ENCODE measurements at regions of chr19 and their contacts with region 1.

Region 1: GRCh38 chr19:49546825-49547565 is 19.2 kb downstream of the RCN3 start:
- DNase-seq: peak; percentile 80
- CTCF ChIP-seq: peak; percentile 81

Region 2: DNA sequence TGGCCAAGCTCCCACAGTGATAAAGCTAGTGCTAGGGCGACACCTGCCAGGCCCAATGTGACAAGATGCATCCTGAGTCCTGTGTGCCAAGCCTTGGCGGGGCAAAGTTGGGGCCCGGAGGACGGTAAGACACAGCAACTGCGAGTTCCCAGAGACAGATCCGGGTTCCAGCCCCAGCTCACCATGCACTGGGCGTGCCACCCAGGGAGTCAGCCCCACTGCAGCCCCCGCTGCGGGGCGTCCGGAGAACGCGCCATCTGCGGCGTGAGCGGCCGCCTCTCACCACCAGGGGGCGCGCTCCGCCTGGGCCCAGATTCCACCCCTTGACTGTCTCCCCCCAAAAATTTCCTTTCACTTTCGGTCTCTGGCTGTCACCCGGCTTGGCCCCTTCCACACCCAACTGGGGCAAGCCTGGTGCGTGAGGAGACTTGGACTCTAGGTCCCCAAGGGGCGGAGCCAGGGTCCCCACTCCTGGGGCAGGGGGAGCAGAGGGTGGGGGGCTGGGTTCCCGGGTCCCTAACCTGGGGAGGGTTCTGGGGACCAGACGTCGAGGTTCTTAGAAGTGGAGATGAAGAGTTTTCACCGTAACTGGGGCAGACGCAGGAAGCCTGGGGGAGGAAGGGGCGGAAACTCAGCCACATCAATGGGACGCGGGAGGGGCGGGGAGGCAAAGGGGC is 73.0 kb before region 1 on chr19 and contains the start of gene FLT3LG:
- CTCF ChIA-PET with region 1: interaction called, 23 read pairs
- POLR2A ChIA-PET with region 1: no interaction called
- DNase-seq: peak; percentile 92
- CTCF ChIP-seq: peak; percentile 94

Region 3: DNA sequence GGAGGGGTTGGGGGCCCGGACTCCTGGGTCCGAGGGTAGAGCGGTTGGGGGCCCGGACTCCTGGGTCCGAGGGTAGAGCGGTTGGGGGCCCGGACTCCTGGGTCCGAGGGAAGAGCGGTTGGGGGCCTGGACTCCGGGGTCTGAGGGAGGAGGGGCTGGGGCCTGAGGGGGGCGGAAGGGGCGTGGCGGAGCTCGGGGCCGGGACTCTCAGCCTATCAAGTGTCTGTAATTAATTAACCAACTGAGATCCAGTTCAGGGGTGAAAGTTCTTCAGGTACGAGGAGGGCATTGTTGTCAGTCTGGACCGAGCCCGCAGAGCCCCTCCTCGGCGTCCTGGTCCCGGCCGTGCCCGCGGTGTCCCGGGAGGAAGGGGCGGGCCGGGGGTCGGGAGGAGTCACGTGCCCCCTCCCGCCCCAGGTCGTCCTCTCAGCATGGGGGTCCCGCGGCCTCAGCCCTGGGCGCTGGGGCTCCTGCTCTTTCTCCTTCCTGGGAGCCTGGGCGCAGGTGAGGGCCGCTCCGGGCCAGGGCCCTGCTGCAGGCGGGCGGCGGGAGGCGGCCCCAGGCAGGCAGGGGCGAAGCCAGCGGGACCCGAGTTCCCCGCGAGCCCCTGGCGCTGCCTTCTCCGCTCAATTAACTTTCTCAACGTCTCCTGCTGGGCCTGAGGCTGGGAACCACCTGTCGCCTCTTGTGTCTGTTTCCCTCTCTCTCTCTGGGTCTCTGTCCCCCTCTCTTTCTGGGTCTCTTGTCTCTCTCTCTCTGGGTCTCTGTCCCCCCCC is 33.8 kb before region 1 on chr19:
- CTCF ChIA-PET with region 1: interaction called, 38 read pairs
- POLR2A ChIA-PET with region 1: no interaction called
- DNase-seq: no peak
- CTCF ChIP-seq: no peak

Region 4: DNA sequence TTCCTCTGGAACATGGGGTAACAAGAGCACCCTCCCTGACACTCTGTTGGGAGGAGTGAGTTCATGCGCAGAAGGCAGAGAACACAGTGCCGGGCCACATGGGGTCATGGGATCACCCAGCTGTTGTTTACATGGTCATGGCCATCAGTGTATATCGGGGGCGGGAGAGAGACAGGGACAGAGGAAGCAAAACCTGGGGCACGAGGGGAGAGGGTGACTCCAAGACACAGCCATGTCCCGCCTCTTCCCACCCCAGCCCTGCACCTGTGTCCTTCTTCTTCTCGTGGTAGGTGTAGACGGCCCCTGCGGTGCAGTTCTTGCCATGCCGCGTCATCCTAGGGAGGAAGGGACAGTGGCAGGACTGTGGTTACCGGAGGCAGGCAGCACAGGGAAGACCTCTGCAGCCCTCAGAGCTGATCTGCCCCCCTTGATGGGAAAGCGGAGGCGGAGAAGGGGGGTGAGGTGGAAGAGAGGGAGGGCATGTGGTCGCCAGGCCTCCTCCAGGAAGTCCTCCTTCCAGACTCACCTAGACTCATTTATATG is 13.4 kb after region 1 on chr19:
- CTCF ChIA-PET with region 1: interaction called, 98 read pairs
- POLR2A ChIA-PET with region 1: no interaction called
- DNase-seq: no peak
- CTCF ChIP-seq: no peak

Region 5: GRCh38 chr19:49651029-49651825 is 104.2 kb after region 1 on chr19:
- CTCF ChIA-PET with region 1: no interaction called
- POLR2A ChIA-PET with region 1: no interaction called
- DNase-seq: no peak
- CTCF ChIP-seq: no peak

Region 6: GRCh38 chr19:49676690-49677231 is 129.8 kb after region 1 on chr19:
- CTCF ChIA-PET with region 1: interaction called, 11 read pairs
- POLR2A ChIA-PET with region 1: no interaction called
- DNase-seq: peak; percentile 95
- CTCF ChIP-seq: no peak

Measured in GM10248 (cell line).